Heart left ventricle (tissue), 16 donors: ENCODE measurements at regions of chr19 and their contacts with region 1.

Region 1: DNA sequence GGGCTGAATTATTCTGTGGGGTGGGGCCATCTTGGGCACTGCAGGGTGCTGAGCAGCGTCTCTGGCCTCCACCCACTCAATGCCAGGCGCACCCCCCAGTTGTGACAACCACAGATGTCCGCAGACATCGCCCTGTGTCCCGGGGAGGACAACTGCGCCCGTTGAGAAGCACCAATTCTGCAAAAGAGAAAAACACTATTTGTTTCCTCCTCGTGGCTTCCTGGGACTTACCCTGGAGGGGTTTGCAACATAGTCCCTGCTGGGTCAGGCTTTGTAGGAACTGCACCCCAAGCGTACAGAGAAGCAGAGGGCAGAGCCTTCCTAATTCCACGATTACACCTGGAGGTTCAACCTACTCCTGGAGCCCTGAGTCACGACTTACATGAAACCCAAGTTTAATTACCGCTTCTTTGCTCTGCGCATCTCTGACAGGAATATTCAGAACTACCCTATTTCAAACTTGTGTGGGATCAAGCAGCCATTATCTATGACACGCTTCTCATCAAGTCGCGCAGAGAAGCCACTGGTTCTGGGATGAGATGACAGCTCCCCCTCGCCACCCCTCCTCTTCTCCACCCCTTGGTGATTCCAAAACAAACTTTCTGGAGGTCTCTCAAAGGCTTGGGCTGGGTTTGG is 11.1 kb upstream of the SLC39A3 start:
- DNase-seq: no peak
- ATAC-seq: no peak
- H3K4me3 ChIP-seq: no peak overlapping the region
- H3K27ac ChIP-seq: no peak overlapping the region
- H3K4me1 ChIP-seq: peaks cover 0 to 6% (median 2%) of the 10 kb centered on the region in 12 donors
- H3K27me3 ChIP-seq: no peaks in the 10 kb centered on the region
- CTCF ChIP-seq: no peak
- POLR2A ChIP-seq: no peak

Region 2: GRCh38 chr19:2640563-2641331 is 110.2 kb before region 1 on chr19:
- intact Hi-C with region 1: loop called in 2 of 10 experiments (anchors 5 kb)
- DNase-seq: peak in 1 of 5 donors; percentile 25
- ATAC-seq: no peak
- H3K4me3 ChIP-seq: no peak overlapping the region
- H3K27ac ChIP-seq: no peak overlapping the region
- H3K4me1 ChIP-seq: peaks cover 0 to 19% (median 4%) of the 10 kb centered on the region in 12 donors
- H3K27me3 ChIP-seq: peaks cover 0 to 10% (median 0%) of the 10 kb centered on the region in 9 donors
- CTCF ChIP-seq: no peak
- POLR2A ChIP-seq: no peak

Region 3: DNA sequence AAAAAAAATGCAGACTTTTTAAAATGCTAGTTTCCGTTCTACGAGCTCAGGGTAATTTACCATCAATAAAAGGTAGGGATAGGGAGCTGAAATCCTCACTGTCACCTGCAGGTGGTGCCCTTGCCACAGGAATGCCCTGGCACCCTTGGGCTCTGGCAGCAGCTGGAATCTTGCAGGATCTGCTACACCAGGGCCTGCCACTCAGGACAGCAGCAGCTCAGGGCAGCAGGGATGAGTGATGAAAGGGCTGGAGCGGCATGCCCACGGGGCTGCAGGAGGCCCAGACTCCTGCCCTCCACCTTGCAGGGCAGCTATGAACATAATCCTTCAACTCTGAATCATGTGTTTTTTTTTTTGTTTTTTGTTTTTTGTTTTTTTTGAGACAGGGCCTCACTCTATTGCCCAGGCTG is 102.4 kb before region 1 on chr19:
- intact Hi-C with region 1: loop called (anchors 1 to 5 kb)
- DNase-seq: peak; percentile 68 to 84 (median 72)
- ATAC-seq: peak; percentile 61 to 91 (median 89)
- H3K4me3 ChIP-seq: no peak overlapping the region
- H3K27ac ChIP-seq: no peak overlapping the region
- H3K4me1 ChIP-seq: peaks cover 0 to 3% (median 0%) of the 10 kb centered on the region in 12 donors
- H3K27me3 ChIP-seq: no peaks in the 10 kb centered on the region
- CTCF ChIP-seq: peak; percentile 65 to 85 (median 72)
- POLR2A ChIP-seq: no peak

Region 4: DNA sequence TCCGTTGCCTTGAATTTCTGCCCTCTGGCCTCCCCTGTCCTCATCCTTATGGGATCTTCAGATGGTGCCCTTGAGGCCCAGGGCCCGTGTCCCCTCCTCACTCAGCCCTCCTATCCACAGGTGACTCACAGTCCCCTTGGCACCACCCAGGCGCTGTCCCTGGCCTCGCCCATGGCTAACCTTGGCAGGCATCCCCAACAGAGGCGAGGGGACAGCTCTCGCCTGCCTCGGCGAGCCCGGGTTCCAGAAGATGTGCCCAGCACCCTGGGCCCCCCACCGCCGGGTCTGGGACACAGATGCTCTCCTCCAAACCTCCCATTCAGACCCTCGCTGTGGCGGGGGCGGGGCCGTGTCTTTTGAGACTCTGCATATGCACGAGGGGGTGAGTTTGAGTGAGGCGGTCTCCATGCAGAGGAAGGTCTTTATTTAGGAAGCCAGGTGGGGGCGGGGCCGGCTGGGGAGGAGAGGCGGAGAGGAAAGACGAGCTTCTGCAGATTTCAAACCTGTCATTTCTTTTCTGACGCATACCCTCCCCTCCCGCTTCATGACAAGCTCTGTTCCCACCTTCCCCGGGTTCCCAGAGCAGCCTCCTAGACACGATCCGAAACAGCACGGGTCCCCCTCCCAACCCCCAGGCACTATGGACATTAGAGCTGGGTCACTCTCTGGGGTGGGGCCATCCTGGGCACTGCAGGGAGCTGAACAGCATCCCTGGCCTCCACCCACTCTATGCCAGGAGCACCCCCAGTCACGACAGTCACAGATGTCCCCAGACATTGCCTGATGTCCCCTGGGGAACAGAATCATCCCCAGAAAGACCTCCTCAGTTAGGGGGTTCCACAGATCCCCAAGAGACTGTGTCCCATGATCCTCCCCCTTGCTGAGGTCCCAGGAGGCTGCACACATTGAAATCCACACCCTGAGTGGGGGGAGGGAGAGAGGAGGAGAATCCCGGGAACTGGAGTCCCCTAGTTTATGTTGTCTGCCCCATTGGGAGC is 96.9 kb before region 1 on chr19:
- intact Hi-C with region 1: loop called in 5 of 10 experiments (anchors 2 to 5 kb)
- DNase-seq: no peak
- ATAC-seq: peak in 3 of 4 donors; percentile 25 to 63 (median 62)
- H3K4me3 ChIP-seq: no peak overlapping the region
- H3K27ac ChIP-seq: no peak overlapping the region
- H3K4me1 ChIP-seq: peaks cover 0 to 7% (median 0%) of the 10 kb centered on the region in 12 donors
- H3K27me3 ChIP-seq: peaks cover 0 to 2% (median 0%) of the 10 kb centered on the region in 9 donors
- CTCF ChIP-seq: no peak
- POLR2A ChIP-seq: no peak

Region 5: GRCh38 chr19:2663920-2664571 is 86.9 kb before region 1 on chr19:
- intact Hi-C with region 1: loop called in 3 of 10 experiments (anchors 5 kb)
- DNase-seq: peak; percentile 79 to 94 (median 87)
- ATAC-seq: peak; percentile 94 to 97 (median 95)
- H3K4me3 ChIP-seq: no peak overlapping the region
- H3K27ac ChIP-seq: peak overlapping the region; percentile 66 to 97 (median 84)
- H3K4me1 ChIP-seq: peaks cover 0 to 17% (median 5%) of the 10 kb centered on the region in 12 donors
- H3K27me3 ChIP-seq: no peaks in the 10 kb centered on the region
- CTCF ChIP-seq: peak; percentile 9 to 51 (median 32)
- POLR2A ChIP-seq: peak in 1 of 2 donors; percentile 19